Left colon (tissue), 2 donors: ENCODE measurements at regions of chr5 and their contacts with region 1.

Region 1: GRCh38 chr5:18699681-18700080 is 1065.4 kb downstream of the TAF11L14 start:
- DNase-seq: no peak
- ATAC-seq: no peak

Region 2: GRCh38 chr5:18393589-18394442 is 305.9 kb before region 1 on chr5:
- intact Hi-C with region 1: loop called in 1 of 2 experiments (anchors 10 kb)
- DNase-seq: peak in 1 of 2 donors; percentile 61
- ATAC-seq: peak; percentile 50

Region 3: GRCh38 chr5:18881615-18882575 is 182.2 kb after region 1 on chr5:
- intact Hi-C with region 1: no loop called
- DNase-seq: no peak
- ATAC-seq: no peak